PC-9 (cell line): ENCODE measurements at regions of chr9 and their contacts with region 1.

Region 1: GRCh38 chr9:125325831-125326230 is 64.2 kb downstream of the GAPVD1 start:
- DNase-seq: peak in 1 of 2 experiments; percentile 98
- H3K4me3 ChIP-seq: no peak overlapping the region
- H3K27ac ChIP-seq: peak overlapping the region; percentile 86
- H3K4me1 ChIP-seq: peaks cover 41% of the 10 kb centered on the region
- H3K27me3 ChIP-seq: no peaks in the 10 kb centered on the region
- CTCF ChIP-seq: no peak

Region 2: GRCh38 chr9:125233678-125234077 is 92.2 kb before region 1 on chr9:
- CTCF ChIA-PET with region 1: no interaction called
- POLR2A ChIA-PET with region 1: interaction called, 16 read pairs
- intact Hi-C with region 1: no loop called
- DNase-seq: peak in 1 of 2 experiments; percentile 67
- H3K4me3 ChIP-seq: no peak overlapping the region
- H3K27ac ChIP-seq: peak overlapping the region; percentile 30
- H3K4me1 ChIP-seq: peaks cover 27% of the 10 kb centered on the region
- H3K27me3 ChIP-seq: no peaks in the 10 kb centered on the region
- CTCF ChIP-seq: no peak

Region 3: GRCh38 chr9:125343518-125344275 is 17.9 kb after region 1 on chr9:
- CTCF ChIA-PET with region 1: no interaction called
- POLR2A ChIA-PET with region 1: no interaction called
- intact Hi-C with region 1: no loop called
- DNase-seq: peak in 1 of 2 experiments; percentile 64
- H3K4me3 ChIP-seq: no peak overlapping the region
- H3K27ac ChIP-seq: no peak overlapping the region
- H3K4me1 ChIP-seq: peaks cover 16% of the 10 kb centered on the region
- H3K27me3 ChIP-seq: no peaks in the 10 kb centered on the region
- CTCF ChIP-seq: no peak

Region 4: DNA sequence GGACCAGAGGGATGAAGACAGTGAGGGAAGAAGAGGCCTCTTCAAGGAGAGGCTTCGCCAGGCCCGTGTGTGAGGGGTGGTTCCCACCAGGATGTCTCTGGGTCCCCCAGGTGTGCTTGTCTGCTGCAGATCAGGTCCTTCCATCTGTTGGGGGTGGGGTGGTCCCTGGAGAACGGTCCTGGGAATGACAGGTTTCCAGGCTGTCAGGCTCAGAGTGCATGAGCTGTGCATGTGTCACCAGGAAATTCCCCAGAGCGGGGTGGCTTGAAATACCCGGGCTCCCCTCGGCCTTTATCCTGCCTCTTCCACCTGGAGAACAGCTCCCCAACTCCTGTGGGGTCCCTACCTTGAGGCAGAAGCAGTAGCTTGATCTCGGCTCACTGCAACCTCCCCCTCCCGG is 54.6 kb after region 1 on chr9:
- CTCF ChIA-PET with region 1: no interaction called
- POLR2A ChIA-PET with region 1: no interaction called
- intact Hi-C with region 1: no loop called
- DNase-seq: no peak
- H3K4me3 ChIP-seq: no peak overlapping the region
- H3K27ac ChIP-seq: no peak overlapping the region
- H3K4me1 ChIP-seq: no peaks in the 10 kb centered on the region
- H3K27me3 ChIP-seq: no peaks in the 10 kb centered on the region
- CTCF ChIP-seq: no peak